Activated CD4-positive, alpha-beta T cell treated with anti-CD3 and anti-CD28 coated beads, Interleukin-2, amount 10 ng/mL, durations not matched to agents 24 days and 14 days (primary cell): ENCODE measurements at regions of chr19 and their contacts with region 1.

Region 1: GRCh38 chr19:34282611-34283519 is 28.5 kb downstream of the GARRE1 start:
- DNase-seq: no peak
- H3K4me3 Mint-ChIP-seq: no peak overlapping the region
- H3K27ac Mint-ChIP-seq: no peak overlapping the region
- H3K4me1 Mint-ChIP-seq: peaks cover 2% of the 10 kb centered on the region
- H3K27me3 Mint-ChIP-seq: no peaks in the 10 kb centered on the region

Region 2: DNA sequence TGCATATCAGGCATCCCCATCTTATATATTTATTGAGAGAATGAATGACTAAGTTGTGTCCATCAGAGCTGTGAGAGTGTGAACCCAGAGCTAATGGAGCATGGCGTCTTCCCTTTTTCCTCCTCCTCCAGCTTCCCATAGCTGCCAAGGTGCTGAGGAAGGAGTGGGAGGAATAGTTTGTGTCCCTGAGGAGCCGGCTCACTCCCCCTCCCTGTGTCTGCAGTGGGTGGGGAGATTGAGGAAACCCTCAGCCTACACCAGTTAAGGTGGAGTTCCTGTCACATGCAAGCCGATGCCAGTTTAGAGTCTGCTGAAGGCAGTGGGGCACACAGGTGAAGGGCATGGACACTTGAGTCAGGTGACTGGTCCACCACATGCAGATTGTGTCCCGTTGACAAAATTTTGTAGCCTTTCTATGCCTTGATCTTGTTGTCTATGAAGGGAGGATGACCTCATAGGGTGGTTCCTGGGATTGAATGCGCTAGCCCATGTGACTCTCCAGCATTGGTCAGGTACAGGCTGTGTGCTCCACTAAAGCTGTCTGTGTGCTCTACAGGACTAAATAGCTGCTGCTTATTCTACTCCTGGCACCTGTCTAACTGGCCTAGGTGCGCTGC is 34.6 kb after region 1 on chr19:
- intact Hi-C with region 1: loop called (anchors 5 kb)
- DNase-seq: no peak
- H3K4me3 Mint-ChIP-seq: no peak overlapping the region
- H3K27ac Mint-ChIP-seq: no peak overlapping the region
- H3K4me1 Mint-ChIP-seq: peaks cover 15% of the 10 kb centered on the region
- H3K27me3 Mint-ChIP-seq: no peaks in the 10 kb centered on the region